HEK293 (cell line): ENCODE measurements at regions of chr22 and their contacts with region 1.

Region 1: GRCh38 chr22:31080848-31081649 is at the start of gene SMTN:
- H3K4me3 ChIP-seq: peak within 1 kb of the TSS; percentile 60
- H3K27ac ChIP-seq: no peak within 1 kb of the TSS
- H3K4me1 ChIP-seq: peaks cover 3% of the 10 kb centered on the region; the same call in 1 of the 2 replicates
- CTCF ChIP-seq: no peak

Region 2: DNA sequence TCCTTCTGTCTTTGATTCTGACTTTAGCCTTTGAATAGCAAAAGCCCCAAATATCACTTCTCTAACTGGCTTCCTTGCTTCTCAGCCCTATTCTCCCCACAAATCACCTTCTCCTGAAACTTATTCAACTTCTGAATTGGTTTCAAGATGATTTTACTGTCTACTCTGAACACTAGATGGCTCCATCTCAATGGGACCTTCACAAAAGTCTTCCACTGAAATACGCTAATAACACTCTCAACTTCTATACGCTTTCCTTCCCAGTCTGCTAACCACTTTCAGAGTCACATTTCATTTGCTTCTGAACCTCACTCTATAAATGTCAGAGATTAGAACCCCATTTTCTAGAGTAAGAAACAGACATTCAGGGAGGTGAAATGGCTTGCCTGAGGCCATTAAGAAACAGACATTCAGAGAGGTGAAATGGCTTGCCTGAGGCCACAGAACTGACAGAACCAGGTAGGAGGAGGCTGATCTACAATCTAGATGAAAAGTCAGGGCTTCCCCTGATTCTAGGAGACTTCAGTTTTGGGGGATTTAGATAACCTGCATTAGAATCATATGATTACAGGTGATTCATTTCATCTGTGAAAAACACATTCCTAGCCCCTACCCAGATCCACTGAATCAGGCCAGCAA is 133.1 kb before region 1 on chr22:
- CTCF ChIA-PET with region 1: interaction called, 13 read pairs
- POLR2A ChIA-PET with region 1: interaction called, 3 read pairs
- H3K4me3 ChIP-seq: no peak overlapping the region
- H3K27ac ChIP-seq: no peak overlapping the region
- H3K4me1 ChIP-seq: no peaks in the 10 kb centered on the region
- CTCF ChIP-seq: peak; percentile 34; the same call in 1 of the 2 replicates

Region 3: GRCh38 chr22:30968924-30969539 is 112.0 kb before region 1 on chr22 and contains the start of gene TUG1:
- CTCF ChIA-PET with region 1: interaction called, 9 read pairs
- POLR2A ChIA-PET with region 1: interaction called, 29 read pairs
- H3K4me3 ChIP-seq: peak within 1 kb of the TSS; percentile 82
- H3K27ac ChIP-seq: peak within 1 kb of the TSS; percentile 95
- H3K4me1 ChIP-seq: peaks cover 5% of the 10 kb centered on the region; the same call in 1 of the 2 replicates
- CTCF ChIP-seq: no peak

Region 4: DNA sequence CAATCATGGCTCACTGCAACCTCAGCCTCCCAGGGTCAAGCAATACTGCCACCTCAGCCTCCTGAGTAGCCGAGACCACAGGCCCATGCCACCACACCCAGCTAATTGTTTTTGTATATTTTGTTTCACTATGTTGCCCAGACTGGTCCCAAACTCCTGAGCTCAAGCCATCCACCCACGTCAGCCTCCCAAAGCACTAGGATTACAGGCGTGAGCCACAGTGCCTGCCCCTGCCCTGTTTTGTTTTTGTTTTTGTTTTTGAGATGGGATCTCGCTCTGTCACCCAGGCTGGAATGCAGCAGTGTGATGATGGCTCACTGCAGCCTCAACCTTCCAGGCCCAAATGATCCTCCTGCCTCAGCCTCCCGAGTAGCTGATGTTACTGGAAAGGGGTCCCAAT is 58.5 kb before region 1 on chr22:
- CTCF ChIA-PET with region 1: no interaction called
- POLR2A ChIA-PET with region 1: no interaction called
- H3K4me3 ChIP-seq: no peak overlapping the region
- H3K27ac ChIP-seq: no peak overlapping the region
- H3K4me1 ChIP-seq: no peaks in the 10 kb centered on the region
- CTCF ChIP-seq: no peak

Region 5: GRCh38 chr22:31062566-31063230 is 18.4 kb before region 1 on chr22:
- CTCF ChIA-PET with region 1: interaction called, 14 read pairs
- POLR2A ChIA-PET with region 1: interaction called, 11 read pairs
- H3K4me3 ChIP-seq: no peak overlapping the region
- H3K27ac ChIP-seq: no peak overlapping the region
- H3K4me1 ChIP-seq: no peaks in the 10 kb centered on the region
- CTCF ChIP-seq: no peak

Region 6: GRCh38 chr22:31192513-31192912 is 111.5 kb after region 1 on chr22:
- CTCF ChIA-PET with region 1: no interaction called
- POLR2A ChIA-PET with region 1: no interaction called
- H3K4me3 ChIP-seq: no peak overlapping the region
- H3K27ac ChIP-seq: no peak overlapping the region
- H3K4me1 ChIP-seq: no peaks in the 10 kb centered on the region
- CTCF ChIP-seq: no peak